ENCODE measurements at regions of chr4 and their contacts with region 1.

Region 1: DNA sequence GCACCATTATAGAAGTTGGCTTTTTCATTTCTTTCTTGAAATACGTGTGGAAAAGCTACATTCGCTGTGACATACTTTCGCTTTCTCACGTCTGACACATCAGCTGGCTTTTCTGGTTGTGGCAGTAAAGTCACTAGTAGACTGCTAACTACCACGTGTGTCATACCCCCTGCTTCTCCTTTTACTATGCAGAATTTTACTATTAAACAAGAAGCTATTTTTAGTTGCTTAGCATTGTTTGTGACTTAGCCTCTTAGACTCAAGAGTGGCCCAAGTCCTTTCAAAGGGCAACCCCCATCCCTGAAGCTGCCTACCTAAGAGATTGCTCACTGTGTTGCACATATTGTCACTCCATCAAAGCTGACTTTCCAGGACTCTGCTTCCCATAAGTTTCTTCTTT is 2.1 kb upstream of the IL2 start:
- DNase-seq: peak; percentile 82
- H3K4me3 Mint-ChIP-seq: peak overlapping the region; percentile 68
- H3K27ac Mint-ChIP-seq: peak overlapping the region; percentile 99
- H3K4me1 Mint-ChIP-seq: peaks cover 43% of the 10 kb centered on the region
- H3K27me3 Mint-ChIP-seq: no peaks in the 10 kb centered on the region

Region 2: DNA sequence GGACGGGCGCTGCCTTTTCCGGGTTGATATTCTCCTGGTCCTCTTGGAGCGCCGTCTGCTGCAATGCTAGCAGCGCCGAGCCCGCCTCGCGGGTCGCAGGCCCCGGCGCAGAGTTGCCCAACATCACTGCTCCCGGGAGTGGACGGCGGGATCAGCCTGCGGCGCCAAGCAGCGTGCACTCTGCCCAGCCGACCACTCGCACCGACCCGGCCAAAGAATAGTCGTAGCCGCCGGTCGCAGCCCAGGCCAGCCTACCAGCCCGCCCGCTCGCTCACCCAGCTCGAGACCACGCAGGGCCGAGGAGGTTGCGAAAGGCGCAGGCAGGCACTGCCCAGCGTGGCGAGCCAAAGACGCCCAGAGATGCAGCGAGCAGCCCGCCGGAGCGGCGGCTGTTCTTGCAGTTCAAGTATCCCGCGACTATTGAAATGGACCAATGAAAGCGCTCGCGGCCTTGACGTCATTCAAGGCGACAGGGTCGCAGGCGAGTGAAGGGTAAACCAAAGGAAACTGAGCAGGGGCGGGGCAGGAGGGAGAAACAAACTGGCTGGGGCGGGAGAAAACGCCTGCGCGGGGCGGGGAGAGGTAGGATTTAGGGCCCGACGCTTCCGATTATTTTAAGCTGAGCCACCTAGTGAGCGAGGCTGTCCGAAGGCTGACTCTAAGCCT is 635.0 kb before region 1 on chr4 and contains the start of gene CCNA2:
- CTCF ChIA-PET with region 1: no interaction called
- intact Hi-C with region 1: loop called (anchors 5 kb)
- DNase-seq: peak; percentile 99
- H3K4me3 Mint-ChIP-seq: peak within 1 kb of the TSS; percentile 98
- H3K27ac Mint-ChIP-seq: peak within 1 kb of the TSS; percentile 86
- H3K4me1 Mint-ChIP-seq: peaks cover 20% of the 10 kb centered on the region
- H3K27me3 Mint-ChIP-seq: no peaks in the 10 kb centered on the region
- total RNA-seq, gene CCNA2: 133 to 138 TPM

Region 3: DNA sequence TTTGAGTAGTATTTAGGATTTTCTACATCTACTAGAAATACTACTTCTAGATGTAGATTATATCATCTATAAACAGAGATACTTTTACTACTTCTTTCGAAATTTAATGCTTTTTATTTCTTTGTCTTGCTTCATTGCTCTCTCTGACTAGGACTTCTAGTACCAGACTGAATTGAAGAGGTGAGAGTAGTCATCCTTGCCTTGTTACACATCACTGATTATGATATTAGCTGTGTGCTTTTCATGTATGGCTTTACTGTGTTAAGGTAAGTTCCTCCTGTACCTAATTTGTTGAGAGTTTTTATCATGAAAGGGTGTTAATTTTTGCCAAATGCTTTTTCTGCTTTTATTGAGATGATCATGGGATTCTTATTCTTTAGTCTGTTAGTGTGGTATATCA is 17.5 kb after region 1 on chr4:
- CTCF ChIA-PET with region 1: interaction called, 3 read pairs
- intact Hi-C with region 1: loop called (anchors 1 kb)
- DNase-seq: no peak
- H3K4me3 Mint-ChIP-seq: no peak overlapping the region
- H3K27ac Mint-ChIP-seq: peak overlapping the region; percentile 73
- H3K4me1 Mint-ChIP-seq: peaks cover 27% of the 10 kb centered on the region
- H3K27me3 Mint-ChIP-seq: no peaks in the 10 kb centered on the region

Region 4: GRCh38 chr4:122508083-122508482 is 49.5 kb after region 1 on chr4:
- CTCF ChIA-PET with region 1: interaction called, 4 read pairs
- intact Hi-C with region 1: loop called (anchors 1 kb)
- DNase-seq: no peak
- H3K4me3 Mint-ChIP-seq: peak overlapping the region; percentile 53
- H3K27ac Mint-ChIP-seq: peak overlapping the region; percentile 98
- H3K4me1 Mint-ChIP-seq: peaks cover 89% of the 10 kb centered on the region
- H3K27me3 Mint-ChIP-seq: no peaks in the 10 kb centered on the region

Region 5: GRCh38 chr4:122542411-122543236 is 84.0 kb after region 1 on chr4:
- CTCF ChIA-PET with region 1: interaction called, 9 read pairs
- intact Hi-C with region 1: loop called (anchors 1 kb)
- DNase-seq: no peak
- H3K4me3 Mint-ChIP-seq: peak overlapping the region; percentile 52
- H3K27ac Mint-ChIP-seq: peak overlapping the region; percentile 100
- H3K4me1 Mint-ChIP-seq: peaks cover 94% of the 10 kb centered on the region
- H3K27me3 Mint-ChIP-seq: no peaks in the 10 kb centered on the region

Region 6: GRCh38 chr4:122548452-122548851 is 89.8 kb after region 1 on chr4:
- CTCF ChIA-PET with region 1: interaction called, 9 read pairs
- intact Hi-C with region 1: loop called (anchors 1 kb)
- DNase-seq: peak; percentile 64
- H3K4me3 Mint-ChIP-seq: peak overlapping the region; percentile 77
- H3K27ac Mint-ChIP-seq: peak overlapping the region; percentile 96
- H3K4me1 Mint-ChIP-seq: peaks cover 93% of the 10 kb centered on the region
- H3K27me3 Mint-ChIP-seq: no peaks in the 10 kb centered on the region

Region 7: GRCh38 chr4:122732329-122733026 is 273.9 kb after region 1 on chr4 and contains the start of gene BBS12:
- CTCF ChIA-PET with region 1: no interaction called
- intact Hi-C with region 1: no loop called
- DNase-seq: peak; percentile 100
- H3K4me3 Mint-ChIP-seq: peak within 1 kb of the TSS; percentile 91
- H3K27ac Mint-ChIP-seq: peak within 1 kb of the TSS; percentile 83
- H3K4me1 Mint-ChIP-seq: peaks cover 17% of the 10 kb centered on the region
- H3K27me3 Mint-ChIP-seq: no peaks in the 10 kb centered on the region
- total RNA-seq, gene BBS12: 1.7 to 2.2 TPM

Region 8: DNA sequence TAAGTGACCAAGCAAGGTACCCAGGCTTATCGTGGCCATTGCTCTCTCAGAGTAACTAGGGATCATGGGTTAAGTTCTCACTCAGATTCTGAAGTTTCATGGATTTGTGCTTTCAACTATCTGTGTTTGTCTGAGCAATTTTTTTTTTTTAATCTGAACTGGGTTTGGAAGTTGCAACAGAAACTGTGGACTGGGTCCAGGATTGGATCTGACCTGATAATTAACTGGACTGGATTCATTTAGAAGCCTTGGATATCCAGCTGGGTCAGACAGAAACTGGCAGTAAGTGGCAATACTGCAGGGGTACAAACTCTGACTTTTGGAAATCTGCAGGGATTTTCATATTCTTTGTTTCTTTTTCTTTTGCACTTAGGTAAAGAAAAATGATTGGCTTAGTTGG is 329.3 kb after region 1 on chr4:
- CTCF ChIA-PET with region 1: no interaction called
- intact Hi-C with region 1: no loop called
- DNase-seq: no peak
- H3K4me3 Mint-ChIP-seq: no peak overlapping the region
- H3K27ac Mint-ChIP-seq: no peak overlapping the region
- H3K4me1 Mint-ChIP-seq: peaks cover 19% of the 10 kb centered on the region
- H3K27me3 Mint-ChIP-seq: peaks cover 7% of the 10 kb centered on the region

Region 9: GRCh38 chr4:123037804-123038203 is 579.2 kb after region 1 on chr4:
- CTCF ChIA-PET with region 1: no interaction called
- intact Hi-C with region 1: no loop called
- DNase-seq: no peak
- H3K4me3 Mint-ChIP-seq: no peak overlapping the region
- H3K27ac Mint-ChIP-seq: no peak overlapping the region
- H3K4me1 Mint-ChIP-seq: peaks cover 3% of the 10 kb centered on the region
- H3K27me3 Mint-ChIP-seq: no peaks in the 10 kb centered on the region